IMR-90 (cell line): ENCODE measurements at regions of chr13 and their contacts with region 1.

Region 1: DNA sequence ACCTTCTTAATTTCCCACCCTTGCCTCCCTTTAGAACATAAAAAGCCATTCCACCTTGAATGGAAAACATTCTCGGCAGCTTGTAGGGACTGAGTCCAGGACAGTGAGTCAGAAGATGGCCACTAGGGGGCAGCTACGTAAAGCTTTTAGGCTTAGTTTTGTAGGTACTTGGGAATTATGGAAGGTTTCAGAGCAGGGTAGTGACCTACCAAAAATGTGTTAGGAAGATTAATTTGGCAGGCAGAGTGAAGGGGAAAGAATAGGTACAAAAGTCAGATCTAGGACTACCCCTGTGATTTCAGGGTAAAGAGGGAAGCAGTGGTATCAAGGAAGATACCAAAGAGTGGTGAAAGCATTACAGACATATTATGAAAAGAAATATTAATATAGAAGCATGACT is 198.4 kb downstream of the NDFIP2 start:
- DNase-seq: peak; percentile 70
- ATAC-seq: peak; percentile 77
- H3K4me3 ChIP-seq: no peak overlapping the region
- H3K27ac ChIP-seq: no peak overlapping the region
- H3K4me1 ChIP-seq: no peaks in the 10 kb centered on the region; the same call in 1 of the 2 replicates
- H3K27me3 ChIP-seq: no peaks in the 10 kb centered on the region
- CTCF ChIP-seq: peak; percentile 74
- POLR2A ChIP-seq: no peak
- RAD21 ChIP-seq: peak; percentile 85

Region 2: DNA sequence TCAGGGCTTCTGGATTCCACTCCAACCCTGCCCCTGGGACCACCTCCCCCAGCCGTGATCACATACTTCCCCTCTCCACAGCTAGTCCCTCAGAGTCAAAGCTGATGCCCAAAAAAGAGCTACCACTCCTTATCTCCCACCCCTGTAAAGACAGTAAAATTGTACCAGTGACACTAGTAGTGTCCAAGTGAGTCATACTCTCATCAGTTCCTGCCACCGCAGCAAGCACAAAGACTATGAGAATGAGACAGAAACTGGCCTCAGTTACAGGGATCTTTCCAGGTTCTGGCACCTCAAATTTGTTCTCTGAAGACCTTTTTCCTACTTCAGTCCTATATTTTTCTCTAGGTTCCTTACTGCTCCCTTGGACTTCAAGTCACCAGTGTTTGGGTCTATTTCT is 517.4 kb after region 1 on chr13:
- CTCF ChIA-PET with region 1: interaction called, 3 read pairs
- POLR2A ChIA-PET with region 1: interaction called, 14 read pairs
- dilution Hi-C with region 1: no loop called
- in situ Hi-C with region 1: no loop called
- intact Hi-C with region 1: no loop called
- DNase-seq: peak; percentile 13
- ATAC-seq: no peak
- H3K4me3 ChIP-seq: no peak overlapping the region
- H3K27ac ChIP-seq: no peak overlapping the region
- H3K4me1 ChIP-seq: no peaks in the 10 kb centered on the region; the same call in 1 of the 2 replicates
- H3K27me3 ChIP-seq: no peaks in the 10 kb centered on the region
- CTCF ChIP-seq: no peak
- POLR2A ChIP-seq: no peak
- RAD21 ChIP-seq: no peak

Region 3: DNA sequence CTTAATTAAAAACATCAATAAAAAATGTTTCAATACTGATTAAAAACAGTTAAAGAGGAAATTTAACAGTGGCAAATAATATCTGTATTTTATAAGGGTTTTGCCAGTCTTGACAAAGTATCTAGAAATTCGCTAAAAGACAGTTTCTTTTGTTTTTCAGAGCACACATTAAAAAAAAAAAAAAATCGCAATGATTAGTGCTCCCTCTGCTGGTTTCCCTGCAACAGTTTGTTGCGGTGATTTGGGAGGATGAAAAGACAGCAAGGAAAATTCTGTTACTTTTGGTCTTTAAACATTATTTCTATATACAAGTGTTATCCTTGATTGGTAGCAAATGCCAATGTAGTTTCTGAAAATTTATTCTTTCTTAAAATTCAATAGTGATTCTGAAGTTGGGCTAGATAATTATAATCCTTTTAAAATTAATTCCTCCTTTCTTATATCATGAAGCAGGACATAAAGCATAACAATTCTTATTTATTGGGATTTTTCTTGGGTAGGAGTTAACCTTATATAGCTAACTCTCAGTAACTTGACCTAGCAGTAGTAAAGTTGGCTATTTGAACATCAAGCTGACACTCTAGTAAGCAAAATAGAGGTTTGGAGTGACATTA is 684.7 kb after region 1 on chr13:
- CTCF ChIA-PET with region 1: interaction called, 3 read pairs
- POLR2A ChIA-PET with region 1: no interaction called
- dilution Hi-C with region 1: no loop called
- in situ Hi-C with region 1: loop called (anchors 10 kb)
- intact Hi-C with region 1: loop called (anchors 1 kb)
- DNase-seq: peak; percentile 49
- ATAC-seq: peak; percentile 27; the same call in 1 of the 2 replicates
- H3K4me3 ChIP-seq: no peak overlapping the region
- H3K27ac ChIP-seq: no peak overlapping the region
- H3K4me1 ChIP-seq: no peaks in the 10 kb centered on the region
- H3K27me3 ChIP-seq: no peaks in the 10 kb centered on the region
- CTCF ChIP-seq: peak; percentile 88
- POLR2A ChIP-seq: no peak
- RAD21 ChIP-seq: peak; percentile 74